Ascending aorta (tissue), 2 donors: ENCODE measurements at regions of chr11 and their contacts with region 1.

Region 1: GRCh38 chr11:120400564-120401364 is 64.6 kb downstream of the ARHGEF12 start:
- DNase-seq: no peak
- H3K4me3 ChIP-seq: peak overlapping the region; percentile 5 to 25
- H3K27ac ChIP-seq: peak overlapping the region in 1 of 2 donors; percentile 11
- H3K4me1 ChIP-seq: peaks cover 0 to 19% of the 10 kb centered on the region in 2 donors
- H3K27me3 ChIP-seq: no peaks in the 10 kb centered on the region
- CTCF ChIP-seq: no peak

Region 2: DNA sequence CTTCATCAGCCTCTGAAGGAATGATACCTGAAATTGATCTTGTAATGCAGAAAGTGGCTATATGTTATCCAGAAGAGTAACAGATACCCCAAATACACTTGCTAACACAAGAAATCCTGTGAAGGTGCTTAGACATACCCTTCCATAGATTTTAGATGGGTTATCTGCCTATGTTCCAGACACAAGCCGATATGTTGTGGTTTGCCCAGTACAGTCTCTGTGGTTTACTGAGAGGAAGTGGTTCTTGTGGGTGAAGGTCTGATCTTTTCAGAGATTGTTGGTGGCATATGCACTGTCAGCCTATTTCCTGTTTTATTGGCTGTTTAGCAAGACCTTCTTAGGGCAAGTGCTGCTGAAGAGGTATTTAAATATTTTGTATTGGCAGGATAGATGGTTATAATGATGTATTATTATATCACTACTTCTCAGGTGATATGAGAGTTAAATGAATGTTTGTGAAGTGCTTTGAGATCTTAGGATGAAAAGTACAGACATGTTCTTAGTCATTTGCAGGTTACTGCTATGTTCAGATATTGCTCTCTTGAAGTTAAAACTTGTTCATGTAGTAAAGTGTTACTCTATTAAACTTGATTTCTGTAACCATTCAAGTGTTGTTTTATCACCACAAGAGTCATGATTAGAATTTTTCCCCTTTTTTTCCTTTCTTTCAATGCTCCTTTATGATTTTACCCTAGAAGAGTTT is 56.3 kb before region 1 on chr11:
- intact Hi-C with region 1: loop called (anchors 5 kb)
- DNase-seq: no peak
- H3K4me3 ChIP-seq: no peak overlapping the region
- H3K27ac ChIP-seq: no peak overlapping the region
- H3K4me1 ChIP-seq: peaks cover 10 to 62% of the 10 kb centered on the region in 2 donors
- H3K27me3 ChIP-seq: no peaks in the 10 kb centered on the region
- CTCF ChIP-seq: no peak

Region 3: GRCh38 chr11:120547811-120548681 is 147.3 kb after region 1 on chr11:
- intact Hi-C with region 1: no loop called
- DNase-seq: peak; percentile 59 to 85
- H3K4me3 ChIP-seq: no peak overlapping the region
- H3K27ac ChIP-seq: peak overlapping the region in 1 of 2 donors; percentile 65
- H3K4me1 ChIP-seq: peaks cover 4 to 15% of the 10 kb centered on the region in 2 donors
- H3K27me3 ChIP-seq: no peaks in the 10 kb centered on the region
- CTCF ChIP-seq: no peak